Posterior vena cava (tissue), 2 donors: ENCODE measurements at regions of chr7 and their contacts with region 1.

Region 1: GRCh38 chr7:17921857-17922416 is 18.4 kb downstream of the SNX13 start:
- DNase-seq: no peak

Region 2: DNA sequence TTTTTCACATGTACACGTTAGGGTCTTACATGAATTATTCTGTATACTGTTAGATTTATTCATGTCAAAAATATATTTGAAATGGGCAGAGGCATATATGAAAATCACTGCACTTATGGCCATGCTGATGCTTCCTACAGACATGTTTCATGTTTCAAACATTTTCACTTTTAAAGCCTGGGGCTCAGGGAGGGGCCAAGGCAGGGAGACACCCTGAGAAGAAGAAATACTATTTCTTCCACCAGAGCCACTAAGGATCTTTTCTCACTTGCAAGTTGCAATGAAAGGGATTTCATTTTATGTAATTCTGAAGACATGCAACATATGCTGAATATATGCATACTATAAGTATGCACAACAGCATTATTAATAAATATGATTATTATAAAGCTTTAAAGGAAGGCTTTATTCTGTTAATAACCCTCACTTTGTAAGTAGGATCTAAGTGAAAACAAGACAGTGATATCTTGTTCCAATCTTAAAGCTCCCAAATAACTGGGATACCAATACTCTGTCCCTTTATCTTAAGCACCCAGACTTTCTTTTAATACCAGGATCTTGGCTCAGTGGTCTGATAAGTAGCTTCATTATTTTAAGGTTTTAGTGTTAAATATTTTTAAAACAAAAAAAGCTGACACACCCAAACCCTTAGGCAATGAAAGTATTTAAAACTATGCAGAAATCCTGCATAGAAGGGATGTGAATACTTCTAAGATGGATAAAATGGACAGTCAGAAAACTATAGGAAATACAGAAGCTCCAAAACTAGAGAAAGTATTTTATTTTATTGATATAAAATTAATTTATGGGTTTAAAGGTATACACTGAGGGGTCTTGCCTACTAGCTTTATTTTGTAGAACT is 129.6 kb before region 1 on chr7:
- intact Hi-C with region 1: no loop called
- DNase-seq: no peak

Region 3: DNA sequence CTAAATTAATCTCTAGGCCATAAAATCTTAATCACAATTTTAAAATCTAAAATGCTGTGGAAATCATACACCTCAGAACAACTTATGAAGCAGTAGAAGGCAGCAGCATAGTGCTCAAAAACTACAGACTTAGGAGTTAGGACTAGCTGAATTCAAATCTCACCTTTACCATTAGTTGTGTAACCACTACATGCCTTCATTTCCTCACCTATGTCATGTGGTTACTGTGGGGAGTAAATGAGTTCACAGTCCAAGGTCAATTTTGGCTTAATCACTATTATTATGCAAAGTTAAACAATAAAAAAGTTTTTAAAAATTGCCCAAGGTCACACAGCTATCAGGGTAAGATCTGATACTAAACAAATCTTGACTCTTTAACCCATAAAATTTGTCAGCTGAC is 18.6 kb before region 1 on chr7:
- intact Hi-C with region 1: loop called in 1 of 2 experiments (anchors 1 kb)
- DNase-seq: no peak

Region 4: DNA sequence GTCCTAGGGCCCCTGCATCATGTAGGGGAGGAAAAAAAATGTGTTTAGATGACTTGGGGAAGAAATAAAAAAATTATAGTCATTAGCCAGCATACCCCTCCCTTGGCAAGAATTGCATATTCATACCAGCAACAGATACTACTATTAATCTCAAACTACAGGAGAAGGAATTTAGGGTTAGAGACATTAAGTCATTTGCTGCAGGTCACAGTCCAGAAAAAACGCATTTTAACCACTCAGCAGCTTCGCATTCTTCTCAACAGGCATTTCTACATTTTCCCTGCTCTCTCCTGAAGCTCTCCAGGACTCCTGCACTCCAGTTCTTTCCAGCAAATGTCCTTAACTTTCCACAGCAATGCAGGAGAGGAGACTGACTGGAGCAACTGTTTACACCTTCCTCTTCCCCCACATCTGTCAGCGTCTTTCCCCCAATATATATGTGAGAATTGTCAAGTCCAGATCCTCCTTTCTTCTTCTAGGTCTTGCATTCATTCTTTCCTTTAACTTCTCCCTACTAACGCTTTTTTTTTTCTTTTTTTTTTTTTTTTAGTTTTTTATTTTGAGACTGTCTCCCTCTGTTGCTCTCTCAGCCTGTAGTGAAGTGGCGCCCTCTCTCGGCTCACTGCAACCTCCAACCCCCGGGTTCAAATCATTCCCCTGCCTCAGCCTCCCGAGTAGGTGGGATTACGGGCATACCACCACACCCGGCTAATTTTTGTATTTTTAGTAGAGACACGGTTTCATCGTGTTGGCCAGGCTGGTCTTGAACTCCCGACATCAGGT is 70.1 kb after region 1 on chr7:
- intact Hi-C with region 1: no loop called
- DNase-seq: no peak

Region 5: GRCh38 chr7:18421297-18422002 is 499.5 kb after region 1 on chr7:
- intact Hi-C with region 1: no loop called
- DNase-seq: no peak